Dendritic cell treated with granulocyte-macrophage colony-stimulating factor and Interleukin-4, amounts not matched to agents 40 ng/mL and 50 ng/mL, for 4 days (primary cell): ENCODE measurements at regions of chr1 and their contacts with region 1.

Region 1: DNA sequence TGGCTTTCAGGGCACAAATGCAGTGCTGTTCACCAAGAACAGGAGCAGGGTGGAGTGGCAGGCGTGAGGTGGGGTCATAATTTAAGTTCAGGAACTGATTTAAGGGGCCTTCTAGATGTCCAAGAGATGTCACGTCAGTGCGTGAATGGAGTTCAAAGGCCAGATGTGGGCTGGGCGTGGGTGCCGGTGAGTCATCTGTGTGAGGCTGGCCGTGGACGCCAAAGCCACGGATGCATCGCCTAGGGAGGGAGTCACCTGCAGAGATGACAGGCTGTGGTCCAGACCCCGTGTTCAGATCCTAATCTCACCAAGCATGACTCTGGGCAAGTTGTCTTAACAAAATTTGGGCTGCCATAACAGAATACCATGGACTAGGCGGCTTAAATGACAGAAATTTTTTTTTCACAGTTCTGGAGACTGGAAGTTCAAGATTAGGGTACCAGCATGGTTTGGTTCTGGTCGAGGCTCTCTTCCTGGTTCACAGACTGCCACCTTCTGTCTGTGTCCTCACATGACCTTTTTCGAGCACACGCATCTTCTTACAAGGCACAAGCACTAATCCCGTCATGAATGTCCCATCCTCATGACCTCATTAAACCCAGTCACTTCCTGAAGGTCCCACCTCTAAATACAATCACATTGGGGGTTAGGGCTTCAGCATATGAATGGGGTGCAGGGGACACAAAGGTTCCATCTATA is 109.6 kb downstream of the PRDM2 start:
- H3K4me3 Mint-ChIP-seq: no peak overlapping the region
- H3K27ac Mint-ChIP-seq: no peak overlapping the region
- H3K4me1 Mint-ChIP-seq: peaks cover 32% of the 10 kb centered on the region
- H3K27me3 Mint-ChIP-seq: no peaks in the 10 kb centered on the region

Region 2: DNA sequence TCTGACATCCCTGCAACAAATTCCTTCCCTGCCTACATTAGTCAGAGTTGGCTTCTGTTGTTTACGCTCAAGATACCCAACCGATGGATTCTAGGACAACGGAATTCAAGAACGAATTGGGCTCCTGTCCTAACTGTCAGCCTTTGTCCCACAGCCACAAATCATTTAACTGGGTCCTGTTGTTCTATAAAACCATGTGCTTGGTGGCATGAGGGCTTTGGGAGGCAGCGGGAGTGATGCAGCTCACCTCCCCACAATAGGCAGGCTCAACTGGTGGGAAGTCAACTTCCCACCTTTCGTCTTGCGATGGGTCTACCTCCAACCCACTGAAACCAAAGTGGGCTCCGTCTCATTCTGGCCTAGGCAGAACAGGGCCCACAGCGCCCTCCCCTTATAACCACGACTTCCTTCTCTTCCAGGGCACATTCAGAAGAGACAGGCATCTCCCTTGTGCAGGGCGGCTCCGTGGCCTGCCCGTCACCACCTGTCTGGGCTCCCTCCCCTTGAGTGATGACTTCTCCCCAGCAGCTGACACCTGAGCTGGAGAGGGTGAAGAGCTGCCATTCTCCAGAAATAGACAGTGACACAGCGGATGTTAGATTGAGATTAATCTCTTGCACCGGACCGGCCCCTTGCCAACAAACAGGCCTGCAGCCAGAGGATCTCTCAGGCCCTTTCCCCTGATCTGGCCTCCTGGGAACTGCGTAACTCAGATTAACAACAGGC is 322.3 kb before region 1 on chr1:
- intact Hi-C with region 1: no loop called
- H3K4me3 Mint-ChIP-seq: no peak overlapping the region
- H3K27ac Mint-ChIP-seq: no peak overlapping the region
- H3K4me1 Mint-ChIP-seq: no peaks in the 10 kb centered on the region
- H3K27me3 Mint-ChIP-seq: peaks cover 10% of the 10 kb centered on the region

Region 3: DNA sequence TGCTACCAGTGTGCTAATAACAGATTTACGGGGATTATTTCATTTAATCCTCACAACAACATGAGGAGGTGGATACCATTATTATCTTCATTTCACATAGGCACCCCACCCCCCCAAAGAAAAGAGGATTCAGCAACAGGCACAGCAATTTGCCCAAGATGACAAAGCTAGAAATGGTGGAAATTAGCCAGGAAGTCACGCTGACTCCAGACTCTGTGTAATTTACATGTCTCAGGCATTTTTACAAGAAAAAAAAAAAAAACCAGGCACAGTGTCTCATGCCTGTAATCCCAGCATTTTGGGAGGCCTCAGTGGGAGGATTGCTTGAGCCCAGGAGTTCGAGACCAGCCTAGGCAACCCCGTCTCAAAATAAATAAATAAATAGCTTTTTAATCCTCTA is 147.1 kb before region 1 on chr1:
- intact Hi-C with region 1: loop called (anchors 2 kb)
- H3K4me3 Mint-ChIP-seq: no peak overlapping the region
- H3K27ac Mint-ChIP-seq: peak overlapping the region; percentile 60
- H3K4me1 Mint-ChIP-seq: peaks cover 31% of the 10 kb centered on the region
- H3K27me3 Mint-ChIP-seq: no peaks in the 10 kb centered on the region